ENCODE measurements at regions of chr22 and their contacts with region 1.

Region 1: GRCh38 chr22:40436505-40437451 is 66.4 kb downstream of the SGSM3 start:
- DNase-seq: peak in 2 of 5 donors; percentile 42 to 66
- ATAC-seq: peak; percentile 53 to 72 (median 70)
- H3K4me3 ChIP-seq: peak overlapping the region in 8 of 12 donors; percentile 11 to 51 (median 22)
- H3K27ac ChIP-seq: peak overlapping the region; percentile 10 to 78 (median 58)
- H3K4me1 ChIP-seq: peaks cover 0 to 94% (median 30%) of the 10 kb centered on the region in 12 donors
- H3K27me3 ChIP-seq: no peaks in the 10 kb centered on the region
- CTCF ChIP-seq: peak; percentile 58 to 82 (median 78)
- POLR2A ChIP-seq: no peak

Region 2: DNA sequence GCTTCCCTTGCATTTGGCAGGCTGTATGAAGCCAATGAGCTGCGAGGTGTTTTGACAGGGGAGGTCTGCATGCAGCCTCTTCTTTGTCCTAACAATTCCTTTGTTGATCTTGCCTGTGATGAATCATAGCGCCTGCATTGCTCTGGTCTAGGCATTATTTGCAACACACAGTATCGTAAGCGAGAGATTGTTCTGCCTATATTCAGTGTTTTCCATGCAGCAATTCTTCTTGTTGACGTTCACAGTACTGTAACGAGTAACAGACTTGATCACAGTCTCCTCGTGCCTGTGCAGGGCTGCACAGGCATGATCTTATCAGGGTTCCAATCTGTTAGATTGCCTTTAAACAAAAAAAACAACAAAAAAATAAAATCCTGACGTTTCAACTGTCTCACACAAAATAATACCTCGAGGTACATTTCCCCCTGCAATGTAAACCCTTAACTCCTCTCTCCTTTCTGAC is 104.4 kb before region 1 on chr22:
- intact Hi-C with region 1: no loop called
- DNase-seq: no peak
- ATAC-seq: no peak
- H3K4me3 ChIP-seq: no peak overlapping the region
- H3K27ac ChIP-seq: peak overlapping the region in 1 of 12 donors; percentile 15
- H3K4me1 ChIP-seq: peaks cover 0 to 46% (median 0%) of the 10 kb centered on the region in 12 donors
- H3K27me3 ChIP-seq: no peaks in the 10 kb centered on the region
- CTCF ChIP-seq: no peak
- POLR2A ChIP-seq: no peak

Region 3: DNA sequence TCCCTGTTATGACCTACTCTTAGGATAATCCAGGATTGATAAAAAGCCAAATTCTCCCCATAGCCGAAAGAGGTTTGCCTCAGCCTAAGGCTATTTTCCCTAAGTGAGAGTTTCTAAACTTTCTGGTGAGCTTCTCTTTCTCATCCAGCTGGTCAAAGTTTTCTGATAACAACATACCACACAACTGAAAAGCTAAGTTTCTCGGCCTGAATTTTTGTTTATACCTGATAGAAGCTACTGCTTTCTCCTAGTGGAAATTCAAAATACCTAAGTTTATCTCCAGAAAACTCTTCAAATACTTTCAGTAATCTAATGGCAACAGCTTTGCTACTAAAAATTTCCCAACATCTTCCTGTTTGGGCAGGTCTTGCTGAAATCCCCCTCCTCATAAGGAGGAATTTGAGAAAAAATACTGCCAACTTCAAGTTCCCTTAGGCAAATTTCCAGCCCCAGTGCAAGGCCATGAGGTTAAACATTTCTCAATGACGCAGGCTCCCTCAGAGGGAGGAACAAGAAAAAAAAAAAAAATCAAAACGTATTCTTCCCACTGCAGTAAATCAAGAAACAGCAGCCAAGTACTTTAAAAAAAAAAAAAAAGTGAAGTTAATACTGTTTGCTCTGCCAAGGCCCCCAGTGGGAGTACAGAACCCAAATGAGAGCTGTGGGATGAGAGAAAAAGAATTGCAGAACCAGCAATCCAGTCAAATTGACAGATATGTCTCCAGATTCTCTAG is 72.8 kb after region 1 on chr22:
- intact Hi-C with region 1: loop called in 1 of 10 experiments (anchors 10 kb)
- DNase-seq: peak in 4 of 5 donors; percentile 37 to 74 (median 64)
- ATAC-seq: peak; percentile 63 to 84 (median 75)
- H3K4me3 ChIP-seq: peak overlapping the region in 1 of 12 donors; percentile 5
- H3K27ac ChIP-seq: peak overlapping the region; percentile 68 to 92 (median 78)
- H3K4me1 ChIP-seq: peaks cover 6 to 80% (median 55%) of the 10 kb centered on the region in 12 donors
- H3K27me3 ChIP-seq: no peaks in the 10 kb centered on the region
- CTCF ChIP-seq: no peak
- POLR2A ChIP-seq: no peak

Region 4: DNA sequence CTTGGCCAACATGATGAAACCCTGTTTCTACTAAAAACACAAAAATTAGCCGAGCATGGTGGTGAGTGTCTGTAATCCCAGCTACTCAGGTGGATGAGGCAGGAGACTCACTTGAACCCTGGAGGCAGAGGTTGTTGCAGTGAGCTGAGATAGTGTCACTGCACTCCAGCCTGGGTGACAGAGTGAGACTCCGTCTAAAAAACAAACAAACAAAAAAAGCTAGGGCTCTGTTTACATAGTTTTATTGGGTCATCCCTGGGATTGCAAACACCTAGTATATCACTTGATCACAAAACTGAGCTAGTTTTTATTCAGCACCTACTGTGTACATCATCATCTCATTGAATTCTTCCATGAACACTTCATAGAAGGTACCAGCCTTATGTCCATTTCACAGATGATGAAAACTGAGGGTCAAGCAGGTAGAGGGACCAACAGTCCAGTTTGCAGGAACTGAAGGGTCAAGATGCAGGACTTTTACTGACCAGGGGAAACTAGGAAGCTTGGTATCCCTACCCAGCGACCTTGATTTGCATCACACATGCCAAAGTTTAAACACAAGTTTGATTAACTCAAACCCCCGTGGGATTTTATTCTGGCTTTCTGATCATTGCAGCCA is 208.9 kb after region 1 on chr22:
- intact Hi-C with region 1: loop called (anchors 1 to 2 kb)
- DNase-seq: no peak
- ATAC-seq: no peak
- H3K4me3 ChIP-seq: no peak overlapping the region
- H3K27ac ChIP-seq: peak overlapping the region in 1 of 12 donors; percentile 76
- H3K4me1 ChIP-seq: peaks cover 0 to 8% (median 0%) of the 10 kb centered on the region in 12 donors
- H3K27me3 ChIP-seq: no peaks in the 10 kb centered on the region
- CTCF ChIP-seq: no peak
- POLR2A ChIP-seq: no peak

Region 5: DNA sequence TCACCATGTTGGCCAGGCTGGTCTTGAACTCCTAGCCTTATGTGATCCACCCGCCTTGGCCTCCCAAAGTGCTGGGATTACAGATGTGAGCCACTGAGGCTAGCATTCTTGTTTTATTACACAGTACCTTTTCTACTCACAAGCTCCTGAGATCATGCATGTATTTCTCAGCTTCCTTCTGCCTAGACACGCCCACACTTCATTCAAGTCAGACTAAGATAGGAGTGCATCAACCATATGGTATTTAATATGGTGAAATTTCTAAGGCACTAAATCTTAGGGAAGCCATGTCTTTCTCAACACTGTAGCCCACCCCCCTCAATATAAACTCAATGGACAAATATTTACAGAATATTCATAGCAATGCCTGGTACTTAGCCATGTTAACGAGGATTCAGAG is 320.3 kb after region 1 on chr22:
- intact Hi-C with region 1: loop called in 3 of 10 experiments (anchors 5 to 10 kb)
- DNase-seq: no peak
- ATAC-seq: no peak
- H3K4me3 ChIP-seq: no peak overlapping the region
- H3K27ac ChIP-seq: no peak overlapping the region
- H3K4me1 ChIP-seq: peaks cover 0 to under 1% (median 0%) of the 10 kb centered on the region in 12 donors
- H3K27me3 ChIP-seq: no peaks in the 10 kb centered on the region
- CTCF ChIP-seq: no peak
- POLR2A ChIP-seq: no peak